Uterus (tissue), 4 donors: ENCODE measurements at regions of chr4 and their contacts with region 1.

Region 1: DNA sequence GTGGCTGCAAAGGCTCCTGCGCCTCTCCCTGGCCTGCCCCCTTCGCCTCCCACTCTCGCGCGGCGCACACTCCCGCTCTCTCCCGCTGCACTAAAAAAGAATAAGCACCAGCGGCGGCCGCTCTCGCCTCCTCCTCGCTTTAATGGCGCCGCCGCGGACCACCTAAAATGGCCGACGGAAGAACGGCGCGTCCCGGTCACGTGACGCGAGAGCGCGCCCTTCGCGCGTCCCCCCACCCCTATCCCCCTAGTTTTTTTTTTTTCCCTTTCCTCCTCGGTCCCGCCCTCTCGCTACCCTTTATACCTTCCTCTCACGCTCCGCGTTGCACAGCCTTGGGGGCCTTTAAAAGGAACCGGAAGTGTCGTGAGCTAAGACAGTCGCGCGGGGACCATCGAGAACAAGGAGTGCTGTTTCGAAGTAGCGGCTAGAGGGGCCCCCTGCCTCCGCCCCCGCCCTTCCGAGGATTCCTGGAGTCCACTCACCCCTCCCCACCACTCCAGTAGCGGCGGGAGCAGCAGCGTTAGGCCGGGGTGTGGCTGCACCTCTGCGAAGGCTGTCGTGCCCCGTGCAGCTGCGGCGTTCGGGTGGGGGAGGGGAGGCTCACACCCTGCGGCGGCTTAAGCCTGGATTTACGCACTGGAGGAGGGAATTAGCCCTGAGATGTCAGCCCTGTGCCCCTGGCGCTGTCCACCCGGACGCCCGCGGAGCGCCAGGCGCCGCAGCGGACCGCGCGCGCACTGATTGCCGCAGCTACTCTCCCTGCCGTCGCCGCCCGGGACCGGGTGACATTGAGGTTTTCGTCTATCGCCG is at the start of gene HNRNPD:
- DNase-seq: peak; percentile 96 to 99
- H3K4me3 ChIP-seq: peak within 1 kb of the TSS; percentile 90 to 96
- H3K27ac ChIP-seq: peak within 1 kb of the TSS; percentile 98 to 99
- H3K4me1 ChIP-seq: peaks cover 5 to 9% of the 10 kb centered on the region in 2 donors
- H3K27me3 ChIP-seq: no peaks in the 10 kb centered on the region
- CTCF ChIP-seq: peak in 2 of 4 experiments; percentile 16 to 17
- POLR2A ChIP-seq: peak; percentile 68 to 89
- total RNA-seq, gene HNRNPD: 48.7 to 220 (median 102) TPM

Region 2: GRCh38 chr4:81635739-81636138 is 738.3 kb before region 1 on chr4:
- intact Hi-C with region 1: no loop called
- DNase-seq: no peak
- H3K4me3 ChIP-seq: no peak overlapping the region
- H3K27ac ChIP-seq: no peak overlapping the region
- H3K4me1 ChIP-seq: no peaks in the 10 kb centered on the region
- H3K27me3 ChIP-seq: no peaks in the 10 kb centered on the region
- CTCF ChIP-seq: no peak
- POLR2A ChIP-seq: no peak

Region 3: GRCh38 chr4:82428969-82429727 is 55.1 kb after region 1 on chr4:
- intact Hi-C with region 1: loop called (anchors 2 kb)
- DNase-seq: peak; percentile 88 to 96
- H3K4me3 ChIP-seq: peak overlapping the region; percentile 87 to 88
- H3K27ac ChIP-seq: peak overlapping the region; percentile 93 to 96
- H3K4me1 ChIP-seq: peaks cover 0 to 14% of the 10 kb centered on the region in 2 donors
- H3K27me3 ChIP-seq: no peaks in the 10 kb centered on the region
- CTCF ChIP-seq: peak; percentile 61 to 98 (median 96)
- POLR2A ChIP-seq: peak; percentile 80 to 81